ENCODE measurements at regions of chr3 and their contacts with region 1.

Region 1: GRCh38 chr3:10263646-10264363 is 15.5 kb downstream of the TATDN2 start:
- DNase-seq: peak; percentile 42
- H3K4me3 ChIP-seq: no peak overlapping the region
- H3K27ac ChIP-seq: no peak overlapping the region
- H3K4me1 ChIP-seq: peaks cover 16% of the 10 kb centered on the region
- H3K27me3 ChIP-seq: no peaks in the 10 kb centered on the region
- CTCF ChIP-seq: peak; percentile 35 to 37
- POLR2A ChIP-seq: no peak

Region 2: DNA sequence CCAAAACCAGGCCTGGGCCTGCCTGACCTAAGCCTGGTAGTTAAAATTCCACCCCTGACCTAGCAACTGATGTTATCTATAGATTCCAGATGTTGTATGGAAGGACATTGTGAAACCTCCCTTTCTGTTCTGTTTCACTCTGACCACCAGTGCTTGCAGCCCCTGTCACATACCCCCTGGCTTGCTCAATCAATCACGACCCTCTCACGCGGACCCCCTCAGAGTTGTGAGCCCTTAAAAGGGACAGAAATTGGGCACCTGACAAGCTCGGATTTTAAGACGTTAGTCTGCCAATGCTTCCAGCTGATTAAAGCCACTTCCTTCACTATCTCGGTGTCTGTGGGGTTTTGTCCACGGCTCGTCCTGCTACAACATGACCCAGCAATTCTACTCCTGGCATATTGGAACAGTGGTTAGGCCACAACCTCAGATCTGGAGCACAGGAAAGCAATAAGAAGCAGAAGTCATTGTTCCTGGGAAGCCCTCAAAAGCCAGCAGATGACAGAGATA is 673.5 kb before region 1 on chr3:
- CTCF ChIA-PET with region 1: no interaction called
- POLR2A ChIA-PET with region 1: no interaction called
- dilution Hi-C with region 1: no loop called
- intact Hi-C with region 1: no loop called
- DNase-seq: no peak
- H3K4me3 ChIP-seq: no peak overlapping the region
- H3K27ac ChIP-seq: no peak overlapping the region
- H3K4me1 ChIP-seq: no peaks in the 10 kb centered on the region
- H3K27me3 ChIP-seq: no peaks in the 10 kb centered on the region
- CTCF ChIP-seq: no peak
- POLR2A ChIP-seq: no peak

Region 3: DNA sequence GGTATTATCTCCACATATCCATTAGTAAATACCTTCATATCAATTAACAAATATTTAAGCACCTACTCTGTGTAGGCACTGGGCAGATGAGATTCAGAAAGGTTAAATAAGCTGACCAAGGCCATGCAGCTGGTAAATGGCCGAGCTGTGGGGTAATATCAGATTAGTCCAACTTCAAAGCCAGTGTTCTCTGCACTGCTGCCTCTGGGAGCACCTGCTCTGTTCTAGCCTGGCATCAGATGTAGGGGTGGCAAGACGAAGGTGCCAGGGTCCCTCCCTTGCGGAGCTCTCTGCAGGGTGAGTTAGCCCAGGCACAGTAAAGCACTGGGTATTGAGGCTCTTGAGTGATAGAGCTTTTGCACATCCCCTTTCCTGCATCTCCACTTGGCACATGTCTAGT is 10.1 kb before region 1 on chr3:
- CTCF ChIA-PET with region 1: interaction called, 23 read pairs
- POLR2A ChIA-PET with region 1: no interaction called
- dilution Hi-C with region 1: no loop called
- intact Hi-C with region 1: no loop called
- DNase-seq: no peak
- H3K4me3 ChIP-seq: no peak overlapping the region
- H3K27ac ChIP-seq: no peak overlapping the region
- H3K4me1 ChIP-seq: peaks cover 14% of the 10 kb centered on the region
- H3K27me3 ChIP-seq: no peaks in the 10 kb centered on the region
- CTCF ChIP-seq: no peak
- POLR2A ChIP-seq: no peak

Measured in endothelial cell of umbilical vein (primary cell).